CD4-positive, alpha-beta memory T cell (primary cell): ENCODE measurements at regions of chr1 and their contacts with region 1.

Region 1: DNA sequence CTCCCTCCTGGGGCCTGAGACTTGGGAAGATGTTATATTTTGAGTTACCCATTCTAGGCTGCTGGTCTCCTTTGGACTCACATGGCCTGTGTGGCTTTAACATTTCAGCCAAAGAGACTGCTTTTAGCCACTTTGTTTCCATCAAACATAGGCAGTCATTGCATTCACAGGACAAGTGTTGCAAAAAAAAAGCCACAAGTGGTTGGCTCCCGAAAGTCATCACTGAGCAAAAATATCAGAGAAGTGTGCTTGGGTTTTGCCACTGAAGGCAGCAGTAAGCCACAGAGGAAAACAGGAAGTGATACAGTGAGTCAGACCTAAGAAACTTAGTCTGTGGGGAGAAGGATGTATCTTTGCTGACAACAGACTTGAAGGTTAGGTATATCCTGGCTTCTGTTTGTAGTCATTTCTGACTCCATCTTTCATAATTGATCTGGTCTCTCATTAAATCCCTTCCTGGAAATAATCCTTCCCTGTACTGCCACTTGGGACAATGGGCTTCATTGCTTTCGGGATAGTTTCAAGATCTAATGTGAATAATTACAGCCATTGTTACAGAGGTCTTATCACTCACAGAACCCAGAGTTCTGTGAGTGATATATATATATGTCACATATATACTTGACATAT is 80.9 kb downstream of the COLGALT2 start:
- DNase-seq: peak; percentile 72 to 78 (median 76)
- H3K4me3 ChIP-seq: no peak overlapping the region
- H3K4me3 Mint-ChIP-seq: peak overlapping the region in 7 of 8 donors; percentile 25 to 75 (median 67)
- H3K27ac ChIP-seq: peak overlapping the region; percentile 53
- H3K27ac Mint-ChIP-seq: no peak overlapping the region
- H3K4me1 ChIP-seq: peaks cover 37% of the 10 kb centered on the region
- H3K4me1 Mint-ChIP-seq: peaks cover 6 to 15% (median 7%) of the 10 kb centered on the region in 4 donors
- H3K27me3 ChIP-seq: no peaks in the 10 kb centered on the region
- H3K27me3 Mint-ChIP-seq: no peaks in the 10 kb centered on the region

Region 2: GRCh38 chr1:183891158-183891856 is 65.4 kb before region 1 on chr1:
- CTCF ChIA-PET with region 1: no interaction called
- POLR2A ChIA-PET with region 1: interaction called, 3 read pairs
- intact Hi-C with region 1: loop called (anchors 5 kb)
- DNase-seq: no peak
- H3K4me3 ChIP-seq: no peak overlapping the region
- H3K4me3 Mint-ChIP-seq: no peak overlapping the region
- H3K27ac ChIP-seq: no peak overlapping the region
- H3K27ac Mint-ChIP-seq: no peak overlapping the region
- H3K4me1 ChIP-seq: peaks cover 34% of the 10 kb centered on the region
- H3K4me1 Mint-ChIP-seq: peaks cover 34 to 42% (median 38%) of the 10 kb centered on the region in 4 donors
- H3K27me3 ChIP-seq: no peaks in the 10 kb centered on the region
- H3K27me3 Mint-ChIP-seq: no peaks in the 10 kb centered on the region

Region 3: DNA sequence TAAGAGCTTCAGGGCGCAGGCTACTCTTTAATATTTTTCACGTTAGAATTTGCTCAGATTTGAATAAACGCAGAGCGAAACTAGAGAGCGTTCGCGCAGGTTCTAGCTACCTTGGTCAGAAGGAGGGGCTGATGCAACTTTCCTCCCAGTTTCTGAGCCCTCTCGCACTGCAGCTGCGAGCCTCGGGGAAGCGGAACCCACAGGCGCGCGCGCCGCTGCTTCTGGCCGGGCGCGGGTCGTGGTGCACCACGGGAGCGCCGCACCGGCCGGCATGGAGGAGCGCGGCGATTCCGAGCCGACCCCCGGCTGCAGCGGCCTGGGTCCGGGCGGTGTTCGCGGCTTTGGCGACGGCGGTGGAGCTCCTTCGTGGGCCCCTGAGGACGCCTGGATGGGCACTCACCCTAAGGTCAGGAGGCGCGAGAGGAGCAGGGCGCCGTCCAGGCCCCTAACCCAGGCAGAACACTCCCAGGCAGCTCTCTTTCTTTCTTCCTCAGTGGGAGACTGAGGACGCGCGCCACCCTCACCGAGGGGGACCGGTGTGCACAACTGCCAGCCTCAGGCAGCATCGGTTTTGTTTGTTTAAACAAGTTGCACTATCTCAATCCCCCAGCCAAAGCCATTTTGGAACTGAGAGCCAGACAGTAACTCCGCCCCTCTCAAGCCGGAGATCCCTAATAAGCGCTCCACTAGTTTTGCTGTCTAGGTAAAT is 95.0 kb after region 1 on chr1 and contains the start of gene TSEN15:
- CTCF ChIA-PET with region 1: interaction called, 53 read pairs
- POLR2A ChIA-PET with region 1: interaction called, 53 read pairs
- intact Hi-C with region 1: loop called (anchors 1 kb)
- DNase-seq: peak; percentile 66 to 74 (median 72)
- H3K4me3 ChIP-seq: peak within 1 kb of the TSS; percentile 88 to 95
- H3K4me3 Mint-ChIP-seq: peak within 1 kb of the TSS; percentile 98 to 99 (median 99)
- H3K27ac ChIP-seq: peak within 1 kb of the TSS; percentile 67
- H3K27ac Mint-ChIP-seq: peak within 1 kb of the TSS; percentile 89 to 98 (median 96)
- H3K4me1 ChIP-seq: peaks cover 33% of the 10 kb centered on the region
- H3K4me1 Mint-ChIP-seq: peaks cover 26 to 47% (median 37%) of the 10 kb centered on the region in 4 donors
- H3K27me3 ChIP-seq: no peaks in the 10 kb centered on the region
- H3K27me3 Mint-ChIP-seq: peaks cover 0 to 5% of the 10 kb centered on the region in 2 donors
- total RNA-seq, gene TSEN15: 34.0 to 42.2 TPM

Region 4: DNA sequence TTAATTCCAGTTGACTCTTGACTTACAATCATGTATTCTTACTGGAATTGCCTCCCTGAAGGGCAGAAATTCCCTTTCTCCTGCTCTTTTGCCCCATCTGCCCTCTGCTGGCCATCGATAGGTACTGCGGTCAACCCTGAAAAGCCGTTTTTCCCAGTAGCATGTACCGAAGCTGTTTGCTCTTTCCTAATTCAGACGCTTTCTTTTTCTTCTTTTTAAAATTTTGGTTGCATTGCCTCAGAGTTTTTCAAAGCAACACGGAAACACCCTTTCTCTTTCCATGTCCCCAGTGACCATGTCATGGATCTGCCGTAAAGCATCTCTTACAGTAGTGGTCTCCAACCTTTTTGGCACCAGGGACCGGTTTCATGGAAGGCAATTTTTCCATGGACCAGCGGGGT is 266.0 kb after region 1 on chr1:
- CTCF ChIA-PET with region 1: interaction called, 20 read pairs
- POLR2A ChIA-PET with region 1: no interaction called
- intact Hi-C with region 1: loop called (anchors 1 kb)
- DNase-seq: peak in 4 of 5 donors; percentile 18 to 34 (median 24)
- H3K4me3 ChIP-seq: no peak overlapping the region
- H3K4me3 Mint-ChIP-seq: peak overlapping the region in 3 of 8 donors; percentile 10 to 46 (median 18)
- H3K27ac ChIP-seq: no peak overlapping the region
- H3K27ac Mint-ChIP-seq: peak overlapping the region in 1 of 7 donors; percentile 18
- H3K4me1 ChIP-seq: no peaks in the 10 kb centered on the region
- H3K4me1 Mint-ChIP-seq: no peaks in the 10 kb centered on the region
- H3K27me3 ChIP-seq: no peaks in the 10 kb centered on the region
- H3K27me3 Mint-ChIP-seq: peaks cover 3 to 4% of the 10 kb centered on the region in 2 donors